CD8-positive, alpha-beta T cell (primary cell): ENCODE measurements at regions of chr6 and their contacts with region 1.

Region 1: DNA sequence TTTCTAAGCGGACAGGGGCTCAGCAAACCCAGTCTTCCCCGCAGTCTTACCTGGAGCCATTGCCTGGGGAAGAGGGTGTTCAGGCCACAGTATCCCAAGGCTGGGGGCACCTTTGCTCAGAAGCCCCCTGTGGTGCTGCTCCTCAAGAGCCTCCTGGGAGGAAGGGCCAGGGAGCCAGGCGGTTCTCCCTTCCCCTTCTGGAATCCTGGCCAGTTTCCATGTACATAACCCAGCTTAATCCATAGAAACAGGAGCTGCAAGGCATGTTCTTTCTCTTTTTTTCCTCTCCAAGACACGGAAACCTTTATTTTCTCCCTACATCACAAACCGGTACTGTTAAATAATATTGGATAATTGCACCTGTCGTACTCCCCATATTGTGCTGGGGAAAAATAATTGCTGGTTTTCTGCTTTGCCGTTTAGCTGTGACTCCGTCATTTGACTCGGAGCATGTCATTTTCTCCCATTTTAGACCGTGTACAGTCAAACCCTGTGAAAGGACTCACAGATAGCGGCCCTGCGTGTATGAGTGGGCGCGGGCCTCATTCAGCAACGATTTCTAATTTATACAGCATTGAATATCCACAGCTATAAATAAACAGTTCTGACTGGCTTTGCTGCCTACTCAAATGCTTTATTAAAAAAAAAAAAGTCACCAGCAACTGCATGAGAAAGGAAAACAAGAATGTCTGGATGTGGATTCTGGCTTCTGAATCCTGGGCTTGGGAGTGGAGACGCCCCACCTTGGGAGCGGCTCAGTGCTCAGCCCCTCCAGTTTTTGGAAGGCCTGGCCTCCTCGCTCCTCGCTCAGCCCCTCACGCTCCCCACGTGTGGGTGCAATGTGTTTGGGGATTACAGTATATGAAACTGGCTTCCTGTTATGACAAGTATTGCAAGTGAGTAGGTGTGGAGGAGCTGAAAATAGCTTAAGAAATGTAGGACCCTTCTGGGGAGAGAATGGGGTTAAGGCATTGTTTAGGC is 67.3 kb downstream of the ADTRP start:
- DNase-seq: peak in 8 of 9 experiments; percentile 10 to 70 (median 30)
- ATAC-seq: peak; percentile 59
- H3K4me3 ChIP-seq: no peak overlapping the region
- H3K4me3 Mint-ChIP-seq: peak overlapping the region; percentile 33
- H3K27ac ChIP-seq: peak overlapping the region; percentile 28 to 46
- H3K27ac Mint-ChIP-seq: peak overlapping the region; percentile 96
- H3K4me1 ChIP-seq: peaks cover 72% of the 10 kb centered on the region
- H3K4me1 Mint-ChIP-seq: peaks cover 74% of the 10 kb centered on the region
- H3K27me3 ChIP-seq: no peaks in the 10 kb centered on the region
- H3K27me3 Mint-ChIP-seq: no peaks in the 10 kb centered on the region
- CTCF ChIP-seq: no peak

Region 2: DNA sequence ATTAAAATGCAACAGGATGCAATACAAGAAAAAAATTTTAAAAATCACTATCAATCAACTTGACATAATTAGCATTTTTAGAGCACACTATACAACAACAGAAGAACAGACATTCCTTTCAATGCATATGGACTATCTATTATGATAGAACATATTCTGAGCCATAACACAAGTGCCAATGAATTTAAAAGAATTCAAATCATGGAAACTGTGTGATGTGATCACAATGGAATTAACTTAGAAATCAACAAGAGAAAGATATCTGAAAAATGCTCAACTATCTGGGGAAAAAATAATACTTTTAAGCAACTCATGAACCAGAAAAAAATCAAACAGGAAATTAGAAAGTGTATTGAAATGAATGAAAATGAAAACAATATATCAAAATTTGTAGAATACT is 39.0 kb before region 1 on chr6:
- CTCF ChIA-PET with region 1: no interaction called
- POLR2A ChIA-PET with region 1: no interaction called
- intact Hi-C with region 1: no loop called
- DNase-seq: no peak
- ATAC-seq: no peak
- H3K4me3 ChIP-seq: no peak overlapping the region
- H3K4me3 Mint-ChIP-seq: no peak overlapping the region
- H3K27ac ChIP-seq: no peak overlapping the region
- H3K27ac Mint-ChIP-seq: no peak overlapping the region
- H3K4me1 ChIP-seq: no peaks in the 10 kb centered on the region
- H3K4me1 Mint-ChIP-seq: no peaks in the 10 kb centered on the region
- H3K27me3 ChIP-seq: no peaks in the 10 kb centered on the region
- H3K27me3 Mint-ChIP-seq: peaks cover 6% of the 10 kb centered on the region
- CTCF ChIP-seq: no peak

Region 3: GRCh38 chr6:11692448-11693376 is 18.6 kb before region 1 on chr6:
- CTCF ChIA-PET with region 1: no interaction called
- POLR2A ChIA-PET with region 1: no interaction called
- intact Hi-C with region 1: no loop called
- DNase-seq: no peak
- ATAC-seq: no peak
- H3K4me3 ChIP-seq: no peak overlapping the region
- H3K4me3 Mint-ChIP-seq: no peak overlapping the region
- H3K27ac ChIP-seq: no peak overlapping the region
- H3K27ac Mint-ChIP-seq: no peak overlapping the region
- H3K4me1 ChIP-seq: no peaks in the 10 kb centered on the region
- H3K4me1 Mint-ChIP-seq: no peaks in the 10 kb centered on the region
- H3K27me3 ChIP-seq: no peaks in the 10 kb centered on the region
- H3K27me3 Mint-ChIP-seq: no peaks in the 10 kb centered on the region
- CTCF ChIP-seq: no peak

Region 4: DNA sequence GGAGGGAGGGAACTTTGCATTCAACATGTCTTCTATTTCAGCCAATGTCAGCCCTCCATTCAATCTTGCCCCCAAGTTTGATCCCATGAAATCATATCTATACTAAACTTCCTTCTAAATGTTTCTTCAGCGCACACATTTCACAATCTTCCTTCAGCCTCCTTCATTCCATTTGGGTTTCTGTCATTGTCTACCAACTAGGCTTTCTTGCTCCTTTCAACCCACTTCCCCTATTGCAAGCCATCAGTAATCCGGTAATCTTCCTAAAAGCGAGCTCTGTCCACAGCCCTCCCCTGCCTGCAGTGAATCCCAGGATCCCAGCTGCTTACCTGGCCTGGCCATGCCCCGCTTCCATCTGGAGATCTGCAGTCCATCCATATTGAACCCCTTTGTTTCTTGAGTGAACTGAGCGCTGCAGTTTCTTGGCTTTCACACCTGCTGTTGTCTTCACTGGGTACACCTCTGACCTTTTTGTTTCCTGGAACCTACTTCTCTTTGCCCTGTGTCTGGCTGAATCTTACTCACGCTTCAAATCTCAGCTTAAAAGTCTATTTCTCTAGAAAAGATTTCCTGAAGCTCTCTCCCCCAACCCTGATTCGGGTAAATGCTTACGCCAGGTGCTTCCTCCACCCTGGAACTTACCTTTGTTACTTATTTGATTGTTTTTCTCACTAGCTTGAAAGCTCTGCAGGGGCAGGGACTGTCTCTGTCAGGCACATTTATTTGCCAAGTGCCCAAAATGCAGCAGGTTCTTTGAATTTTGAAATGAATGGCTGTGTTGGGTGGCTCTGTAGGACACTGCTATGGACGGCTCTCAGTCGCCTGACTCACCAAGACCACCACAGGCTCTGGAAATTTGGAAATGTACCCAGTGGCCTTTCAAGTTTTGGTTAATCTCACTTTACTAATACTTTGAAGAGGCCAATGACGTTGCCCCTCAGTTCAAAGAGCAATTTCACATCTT is 17.0 kb after region 1 on chr6:
- CTCF ChIA-PET with region 1: interaction called, 7 read pairs
- POLR2A ChIA-PET with region 1: interaction called, 9 read pairs
- intact Hi-C with region 1: loop called in 1 of 2 experiments (anchors 2 kb)
- DNase-seq: peak in 6 of 9 experiments; percentile 7 to 48 (median 27)
- ATAC-seq: peak; percentile 50
- H3K4me3 ChIP-seq: peak overlapping the region in 1 of 2 experiments; percentile 12
- H3K4me3 Mint-ChIP-seq: peak overlapping the region; percentile 75
- H3K27ac ChIP-seq: peak overlapping the region; percentile 22 to 47
- H3K27ac Mint-ChIP-seq: peak overlapping the region; percentile 95
- H3K4me1 ChIP-seq: peaks cover 56% of the 10 kb centered on the region
- H3K4me1 Mint-ChIP-seq: peaks cover 70% of the 10 kb centered on the region
- H3K27me3 ChIP-seq: no peaks in the 10 kb centered on the region
- H3K27me3 Mint-ChIP-seq: no peaks in the 10 kb centered on the region
- CTCF ChIP-seq: no peak

Region 5: GRCh38 chr6:11909696-11910132 is 198.4 kb after region 1 on chr6:
- CTCF ChIA-PET with region 1: no interaction called
- POLR2A ChIA-PET with region 1: no interaction called
- intact Hi-C with region 1: loop called in 1 of 2 experiments (anchors 10 kb)
- DNase-seq: no peak
- ATAC-seq: no peak
- H3K4me3 ChIP-seq: no peak overlapping the region
- H3K4me3 Mint-ChIP-seq: no peak overlapping the region
- H3K27ac ChIP-seq: no peak overlapping the region
- H3K27ac Mint-ChIP-seq: no peak overlapping the region
- H3K4me1 ChIP-seq: no peaks in the 10 kb centered on the region
- H3K4me1 Mint-ChIP-seq: no peaks in the 10 kb centered on the region
- H3K27me3 ChIP-seq: no peaks in the 10 kb centered on the region
- H3K27me3 Mint-ChIP-seq: no peaks in the 10 kb centered on the region
- CTCF ChIP-seq: no peak